Psoas muscle (tissue), 8 donors: ENCODE measurements at regions of chr22 and their contacts with region 1.

Region 1: DNA sequence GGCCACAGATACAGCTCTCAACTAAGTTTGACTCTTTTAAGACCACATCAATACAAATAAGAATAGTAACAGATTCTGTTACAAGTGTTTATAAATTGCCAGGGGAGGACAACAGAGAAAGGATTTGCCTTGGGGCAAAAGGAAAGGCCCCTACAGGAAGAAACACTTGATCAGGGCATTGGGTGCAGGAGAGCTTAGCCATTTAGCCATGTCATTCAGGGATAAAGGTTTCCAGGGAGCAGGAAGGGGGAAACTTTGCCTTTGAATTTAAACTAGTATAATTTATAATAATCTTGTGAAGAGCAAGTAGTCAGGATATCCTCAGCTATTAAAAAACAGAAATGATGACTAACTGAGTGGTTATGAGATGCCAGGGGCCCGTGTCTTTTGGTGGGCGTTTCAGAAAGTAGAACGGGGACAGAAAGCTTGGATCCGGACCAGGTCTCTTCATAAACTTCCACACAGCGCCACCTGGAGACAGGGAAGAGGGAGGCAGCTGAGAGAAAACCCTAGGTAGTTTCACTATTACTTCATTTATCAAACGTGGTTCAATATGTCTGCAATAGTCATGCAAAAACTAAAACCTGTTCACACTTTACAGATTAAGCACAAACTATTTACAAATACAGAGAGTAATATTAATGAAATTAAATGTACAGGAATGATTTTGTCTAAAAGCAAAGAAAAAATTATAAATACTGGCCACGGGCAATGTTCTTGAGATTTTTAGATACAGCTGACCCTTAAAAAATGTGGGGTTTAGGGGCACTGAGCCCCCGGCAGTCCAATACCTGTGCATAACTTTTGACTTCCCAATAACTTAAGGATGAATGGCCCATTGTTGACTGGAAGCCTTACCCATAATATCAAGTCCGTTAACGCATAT is 11.0 kb upstream of the SLC5A4 start:
- DNase-seq: peak; percentile 55 to 72
- ATAC-seq: peak; percentile 53 to 84 (median 66)
- H3K4me3 ChIP-seq: peak overlapping the region; percentile 23
- H3K27ac ChIP-seq: no peak overlapping the region
- H3K4me1 ChIP-seq: peaks cover 8% of the 10 kb centered on the region
- H3K27me3 ChIP-seq: peaks cover 0 to 5% (median 0%) of the 10 kb centered on the region in 3 donors
- CTCF ChIP-seq: peak; percentile 78

Region 2: DNA sequence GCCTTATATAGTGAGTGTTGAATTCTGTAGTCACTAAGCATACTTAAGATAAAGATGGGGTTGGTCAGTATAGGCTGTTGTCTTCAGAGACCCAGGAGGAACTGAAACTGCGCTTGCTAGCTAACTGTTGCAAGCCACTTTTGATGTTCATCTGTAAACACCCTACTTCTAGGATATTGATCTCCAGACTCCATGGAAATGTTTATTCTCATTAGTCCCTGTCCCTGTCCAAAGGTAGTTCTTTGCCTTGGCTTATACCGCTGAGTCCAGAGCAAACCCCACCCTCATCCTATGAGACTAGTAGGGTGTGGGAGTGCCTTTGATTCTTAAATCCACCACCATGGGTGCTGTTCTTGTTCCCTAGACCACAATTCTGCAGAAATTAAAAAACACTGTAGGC is 475.9 kb before region 1 on chr22:
- intact Hi-C with region 1: no loop called
- DNase-seq: no peak
- ATAC-seq: no peak
- H3K4me3 ChIP-seq: no peak overlapping the region
- H3K27ac ChIP-seq: no peak overlapping the region
- H3K4me1 ChIP-seq: no peaks in the 10 kb centered on the region
- H3K27me3 ChIP-seq: no peaks in the 10 kb centered on the region
- CTCF ChIP-seq: no peak

Region 3: DNA sequence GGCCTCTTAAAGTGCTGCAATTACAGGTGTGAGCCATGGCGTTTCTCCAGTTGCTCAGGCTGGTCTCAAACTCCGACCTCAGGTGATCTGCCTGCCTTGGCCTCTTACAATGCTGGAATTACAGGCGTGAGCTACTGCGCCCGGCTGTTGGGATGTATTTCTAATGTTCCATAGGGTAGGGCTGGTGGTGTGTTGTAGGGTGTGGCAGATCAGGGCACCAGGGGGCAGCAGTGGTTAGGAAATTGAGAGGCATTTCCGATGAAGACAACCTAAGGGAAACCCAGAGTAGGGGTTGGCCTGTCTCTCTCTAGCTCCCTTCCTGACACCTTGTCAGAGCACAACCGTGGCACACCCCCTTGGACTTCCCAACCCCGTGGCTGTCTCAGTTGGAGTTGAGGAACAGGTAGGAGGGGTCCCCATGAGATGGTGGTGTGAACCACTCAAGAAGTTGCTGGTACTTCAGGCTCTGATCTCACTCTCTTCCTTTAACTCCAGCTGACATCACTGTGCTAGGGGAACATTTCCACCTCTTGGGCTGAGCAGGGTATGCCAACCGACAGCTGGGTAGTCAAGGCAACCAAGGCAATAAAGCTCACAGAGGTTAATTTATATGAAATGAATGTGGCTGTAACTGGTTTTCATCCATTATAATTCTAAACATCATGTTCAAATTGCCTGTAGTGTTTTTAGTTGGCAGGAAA is 288.8 kb before region 1 on chr22:
- intact Hi-C with region 1: loop called (anchors 5 kb)
- DNase-seq: peak; percentile 70 to 87
- ATAC-seq: peak; percentile 93 to 97 (median 95)
- H3K4me3 ChIP-seq: no peak overlapping the region
- H3K27ac ChIP-seq: no peak overlapping the region
- H3K4me1 ChIP-seq: no peaks in the 10 kb centered on the region
- H3K27me3 ChIP-seq: no peaks in the 10 kb centered on the region
- CTCF ChIP-seq: peak; percentile 76

Region 4: DNA sequence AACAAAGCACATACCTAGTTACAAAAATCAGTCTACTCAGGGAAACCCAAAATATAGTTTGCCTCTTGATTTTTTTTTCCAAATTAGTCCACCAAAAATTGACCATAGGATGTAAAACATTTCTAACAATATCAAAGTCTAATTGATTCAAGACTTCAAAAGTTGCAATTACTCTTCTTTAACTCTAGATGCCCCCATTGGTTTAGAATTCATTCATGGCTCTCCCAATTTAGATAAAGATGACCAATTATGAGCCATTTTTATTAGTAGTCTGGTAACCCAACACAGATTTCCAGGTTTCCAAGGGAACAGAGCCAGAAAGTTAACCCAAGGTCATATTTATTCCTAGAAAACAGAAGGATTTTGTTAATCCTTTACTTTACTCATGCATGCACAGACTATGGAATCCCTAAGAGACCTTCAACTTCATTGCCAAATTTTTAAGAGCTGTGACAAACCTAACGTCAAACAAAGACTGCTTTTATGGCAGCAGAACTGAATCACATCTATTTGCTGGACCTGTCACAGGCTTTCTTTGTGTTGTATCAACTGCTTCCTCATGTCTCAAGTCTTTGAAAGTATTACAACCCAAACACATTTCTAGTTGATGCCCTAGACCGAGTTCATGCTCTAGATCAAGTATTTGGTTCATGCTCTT is 162.3 kb before region 1 on chr22:
- intact Hi-C with region 1: loop called in 1 of 2 experiments (anchors 2 kb)
- DNase-seq: no peak
- ATAC-seq: no peak
- H3K4me3 ChIP-seq: no peak overlapping the region
- H3K27ac ChIP-seq: no peak overlapping the region
- H3K4me1 ChIP-seq: no peaks in the 10 kb centered on the region
- H3K27me3 ChIP-seq: no peaks in the 10 kb centered on the region
- CTCF ChIP-seq: peak; percentile 30